Gastrocnemius medialis (tissue), 4 donors: ENCODE measurements at regions of chr3 and their contacts with region 1.

Region 1: GRCh38 chr3:186220911-186221645 is 112.2 kb upstream of the ETV5 start:
- DNase-seq: peak; percentile 78 to 90
- ATAC-seq: peak; percentile 73 to 78
- H3K4me3 ChIP-seq: no peak overlapping the region
- H3K27ac ChIP-seq: peak overlapping the region; percentile 85 to 95 (median 92)
- H3K4me1 ChIP-seq: peaks cover 42 to 67% of the 10 kb centered on the region in 2 donors
- H3K27me3 ChIP-seq: no peaks in the 10 kb centered on the region
- CTCF ChIP-seq: peak in 4 of 5 experiments; percentile 18 to 51 (median 32)
- POLR2A ChIP-seq: peak; percentile 59 to 74

Region 2: DNA sequence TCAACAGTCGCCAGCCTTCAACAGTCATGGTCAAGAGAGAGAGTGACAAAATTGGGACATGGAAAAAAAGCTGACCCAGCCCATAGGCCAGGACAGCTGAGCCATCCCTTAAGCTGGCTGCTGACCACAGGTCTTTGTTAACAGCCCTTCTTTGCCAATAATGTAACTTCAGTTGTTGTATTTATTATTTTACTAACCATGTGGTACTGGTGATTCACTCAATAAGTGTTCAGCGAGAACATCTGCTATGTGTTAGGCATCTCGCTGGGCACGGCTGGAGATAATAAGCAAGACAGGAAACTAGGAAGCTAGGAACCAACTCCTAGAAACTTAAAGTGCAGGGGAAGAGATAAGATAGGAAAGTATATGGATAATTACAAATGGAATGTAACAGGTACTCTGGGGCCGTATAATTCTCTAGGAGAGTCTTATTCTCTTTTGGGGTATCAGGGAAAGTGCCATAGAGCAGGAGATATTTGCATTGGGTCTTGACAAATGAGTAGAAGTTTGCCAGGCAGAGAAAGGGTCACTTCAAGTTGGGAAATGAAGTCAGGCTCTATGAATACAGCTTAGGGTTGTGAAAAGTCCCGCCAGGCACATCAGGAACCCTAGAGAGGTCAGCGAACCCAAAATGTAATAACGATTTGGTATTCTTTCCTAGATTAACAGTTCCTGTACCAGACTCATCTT is 199.3 kb before region 1 on chr3:
- in situ Hi-C with region 1: no loop called
- intact Hi-C with region 1: loop called (anchors 1 kb)
- DNase-seq: peak; percentile 28 to 63
- ATAC-seq: peak; percentile 87 to 96
- H3K4me3 ChIP-seq: no peak overlapping the region
- H3K27ac ChIP-seq: peak overlapping the region; percentile 50 to 65 (median 58)
- H3K4me1 ChIP-seq: peaks cover 0 to 3% of the 10 kb centered on the region in 2 donors
- H3K27me3 ChIP-seq: no peaks in the 10 kb centered on the region
- CTCF ChIP-seq: no peak
- POLR2A ChIP-seq: no peak

Region 3: DNA sequence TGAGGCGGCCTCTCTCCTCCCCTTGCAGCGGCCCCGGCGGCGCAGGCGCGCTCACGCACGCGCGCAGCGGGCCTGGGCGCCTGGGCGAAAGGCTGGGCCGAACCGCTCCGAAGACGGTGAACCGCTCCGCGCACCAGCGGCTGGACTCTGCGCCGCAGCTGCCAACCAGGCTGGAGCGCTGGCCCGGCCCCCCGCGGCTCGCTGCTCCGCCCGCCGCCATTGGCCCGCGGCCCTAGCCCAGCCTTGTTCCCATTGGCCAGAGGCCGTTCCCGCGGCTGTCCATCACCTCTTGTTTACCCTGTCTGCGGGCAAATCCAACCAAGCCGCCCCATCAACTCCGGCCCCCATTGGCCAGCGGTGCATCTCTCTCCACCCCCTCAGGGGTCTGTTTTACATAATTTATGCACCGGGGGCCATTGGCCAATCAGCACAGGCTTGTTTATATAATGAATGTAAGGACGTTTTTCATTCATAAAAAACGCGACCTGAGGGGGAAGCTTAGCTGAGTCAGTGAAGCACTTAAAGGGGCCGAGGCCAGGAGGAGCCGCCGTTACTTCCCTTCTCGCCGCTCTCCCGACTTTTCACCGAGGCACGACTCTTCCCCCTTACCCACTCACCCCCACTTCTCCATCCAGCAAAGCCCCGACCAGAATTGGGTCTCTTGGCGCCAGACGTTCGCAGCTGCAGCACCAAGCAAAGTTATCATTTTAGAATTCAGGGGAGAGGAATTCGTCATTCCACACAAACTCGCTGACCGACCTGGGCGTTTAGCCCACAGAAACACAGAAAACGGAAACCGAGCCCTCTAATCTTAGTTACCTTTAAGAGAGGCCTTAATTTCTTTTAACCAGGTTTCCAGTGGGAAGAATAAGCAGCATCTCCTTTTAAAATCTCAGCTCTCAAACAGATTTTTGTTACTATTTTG is 111.9 kb before region 1 on chr3 and contains the start of gene ETV5:
- in situ Hi-C with region 1: loop called in 1 of 4 experiments (anchors 10 kb)
- intact Hi-C with region 1: loop called (anchors 2 kb)
- DNase-seq: peak; percentile 100
- ATAC-seq: peak; percentile 90 to 93
- H3K4me3 ChIP-seq: peak within 1 kb of the TSS; percentile 77 to 87 (median 80)
- H3K27ac ChIP-seq: peak within 1 kb of the TSS; percentile 88 to 95 (median 91)
- H3K4me1 ChIP-seq: peaks cover 18 to 23% of the 10 kb centered on the region in 2 donors
- H3K27me3 ChIP-seq: peaks cover 0 to 6% (median 3%) of the 10 kb centered on the region in 3 donors
- CTCF ChIP-seq: peak in 2 of 5 experiments; percentile 20 to 21
- POLR2A ChIP-seq: peak; percentile 86 to 95
- total RNA-seq, gene ETV5: 19.0 to 31.6 (median 21.3) TPM

Region 4: DNA sequence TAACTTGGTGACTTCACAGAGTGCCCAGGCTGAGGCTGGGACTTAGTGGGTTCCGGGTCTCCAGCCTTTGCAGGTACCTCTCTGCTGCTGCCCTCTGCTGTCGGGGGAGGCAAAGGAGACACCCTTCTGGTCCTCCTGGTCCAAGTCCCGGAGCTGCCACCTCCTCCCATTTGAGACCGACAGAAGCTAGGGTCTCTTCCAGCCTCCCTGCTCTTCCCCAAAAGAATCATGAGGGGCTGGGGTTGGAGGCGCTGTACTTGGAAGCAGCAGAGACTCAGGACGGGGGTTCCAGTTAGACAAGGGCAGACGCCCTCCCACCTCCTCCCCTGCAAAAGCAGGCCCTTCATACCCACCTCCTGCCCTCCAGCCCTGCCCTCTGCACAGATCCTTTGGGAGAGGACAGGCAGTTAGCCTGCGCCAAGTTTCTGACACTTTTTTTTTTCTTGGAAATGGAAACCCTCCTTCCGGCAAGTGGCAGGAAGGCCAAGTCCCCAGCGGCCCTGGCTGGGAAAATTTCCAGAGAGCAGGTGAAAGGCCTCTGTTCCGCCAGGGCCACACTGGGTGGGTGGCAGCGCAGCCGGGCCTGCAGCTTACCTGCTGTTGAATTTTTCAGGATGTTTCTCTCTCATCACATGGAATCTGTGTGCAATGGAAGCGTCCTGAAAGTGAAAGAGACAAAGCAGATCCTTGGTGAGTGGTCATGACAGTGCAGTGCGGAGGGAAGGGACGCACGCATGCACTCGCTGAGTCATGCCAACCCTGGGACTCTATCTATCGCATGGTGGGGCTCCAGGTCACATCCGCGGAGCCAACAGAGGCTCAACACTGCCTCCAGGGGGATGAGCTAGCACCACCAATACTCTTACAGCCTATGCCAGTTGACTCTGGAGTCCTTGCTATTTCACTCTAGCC is 21.1 kb after region 1 on chr3:
- in situ Hi-C with region 1: no loop called
- intact Hi-C with region 1: loop called (anchors 1 kb)
- DNase-seq: peak; percentile 61 to 84
- ATAC-seq: peak; percentile 79 to 88
- H3K4me3 ChIP-seq: peak overlapping the region; percentile 30 to 59 (median 54)
- H3K27ac ChIP-seq: peak overlapping the region; percentile 85 to 88 (median 86)
- H3K4me1 ChIP-seq: peaks cover 25 to 28% of the 10 kb centered on the region in 2 donors
- H3K27me3 ChIP-seq: no peaks in the 10 kb centered on the region
- CTCF ChIP-seq: peak; percentile 54 to 71 (median 62)
- POLR2A ChIP-seq: peak in 1 of 2 donors; percentile 21